HepG2 (cell line): ENCODE measurements at regions of chr1 and their contacts with region 1.

Region 1: GRCh38 chr1:70134148-70134547 is 71.2 kb downstream of the LRRC40 start:
- DNase-seq: no peak
- ATAC-seq: no peak
- H3K4me3 ChIP-seq: no peak overlapping the region
- H3K27ac ChIP-seq: no peak overlapping the region
- H3K4me1 ChIP-seq: peaks cover 19% of the 10 kb centered on the region
- H3K27me3 ChIP-seq: peaks cover 0 to 3% of the 10 kb centered on the region in 2 experiments; a peak in 1 of 5 replicates
- CTCF ChIP-seq: no peak
- EP300 ChIP-seq: no peak
- POLR2A ChIP-seq: no peak
- RAD21 ChIP-seq: no peak

Region 2: DNA sequence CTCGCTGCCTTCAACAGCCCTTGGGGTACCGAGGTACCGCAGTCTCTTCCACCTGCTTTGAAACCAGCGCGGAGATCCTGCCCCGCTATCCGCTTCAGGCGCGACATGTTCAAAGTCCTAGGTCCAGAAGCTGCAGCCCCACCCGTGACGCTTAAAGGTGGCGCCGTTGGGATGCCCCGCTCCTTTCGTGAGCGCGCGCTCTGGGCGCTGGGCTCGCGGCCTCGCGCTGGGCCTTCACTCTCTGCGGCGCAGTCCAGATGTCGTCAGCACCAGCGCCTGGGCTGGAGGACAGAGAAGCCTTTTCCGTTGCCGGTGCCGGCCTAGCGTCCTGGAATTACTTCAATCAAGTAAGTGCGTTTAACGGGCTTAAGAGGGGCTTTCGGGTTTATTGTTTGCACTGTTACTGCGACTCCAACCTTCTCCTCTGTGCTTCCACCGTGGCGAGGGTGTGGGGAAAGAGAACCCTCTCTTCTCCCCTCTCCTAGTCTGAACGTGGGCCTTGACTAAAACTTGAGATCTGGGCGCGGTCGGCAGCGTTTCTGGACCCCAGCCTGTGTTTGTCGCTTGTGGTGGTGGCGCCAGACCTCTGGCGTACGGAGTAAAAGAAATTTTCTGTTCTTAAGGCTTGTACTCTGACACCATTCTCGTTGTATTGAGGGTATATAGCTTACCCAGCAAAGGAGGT is 71.4 kb after region 1 on chr1 and contains the start of gene LRRC40:
- CTCF ChIA-PET with region 1: no interaction called
- POLR2A ChIA-PET with region 1: no interaction called
- in situ Hi-C with region 1: no loop called
- intact Hi-C with region 1: loop called (anchors 2 kb)
- DNase-seq: peak; percentile 94
- ATAC-seq: peak; percentile 94
- H3K4me3 ChIP-seq: peak within 1 kb of the TSS; percentile 81 to 98 (median 90)
- H3K27ac ChIP-seq: peak within 1 kb of the TSS; percentile 96
- H3K4me1 ChIP-seq: peaks cover 58% of the 10 kb centered on the region
- H3K27me3 ChIP-seq: no peaks in the 10 kb centered on the region; a peak in 2 of 5 replicates
- CTCF ChIP-seq: no peak
- EP300 ChIP-seq: peak in 1 of 2 experiments; percentile 37; a peak in 2 of 4 replicates
- POLR2A ChIP-seq: peak; percentile 88 to 95
- RAD21 ChIP-seq: peak; percentile 11; the same call in 1 of the 2 replicates
- total RNA-seq, gene LRRC40: 32.7 and 54.1 TPM in 2 replicates

Region 3: GRCh38 chr1:70221241-70222121 is 87.3 kb after region 1 on chr1 and contains the start of gene SRSF11:
- CTCF ChIA-PET with region 1: no interaction called
- POLR2A ChIA-PET with region 1: no interaction called
- in situ Hi-C with region 1: no loop called
- intact Hi-C with region 1: loop called (anchors 1 kb)
- DNase-seq: peak; percentile 85
- ATAC-seq: peak; percentile 97
- H3K4me3 ChIP-seq: peak within 1 kb of the TSS; percentile 82 to 97 (median 91)
- H3K27ac ChIP-seq: peak within 1 kb of the TSS; percentile 97
- H3K4me1 ChIP-seq: peaks cover 37% of the 10 kb centered on the region
- H3K27me3 ChIP-seq: no peaks in the 10 kb centered on the region; a peak in 1 of 5 replicates
- CTCF ChIP-seq: no peak
- EP300 ChIP-seq: no peak
- POLR2A ChIP-seq: peak; percentile 69 to 81
- RAD21 ChIP-seq: peak; percentile 36; the same call in 1 of the 2 replicates
- total RNA-seq, gene SRSF11: 104 and 118 TPM in 2 replicates

Region 4: DNA sequence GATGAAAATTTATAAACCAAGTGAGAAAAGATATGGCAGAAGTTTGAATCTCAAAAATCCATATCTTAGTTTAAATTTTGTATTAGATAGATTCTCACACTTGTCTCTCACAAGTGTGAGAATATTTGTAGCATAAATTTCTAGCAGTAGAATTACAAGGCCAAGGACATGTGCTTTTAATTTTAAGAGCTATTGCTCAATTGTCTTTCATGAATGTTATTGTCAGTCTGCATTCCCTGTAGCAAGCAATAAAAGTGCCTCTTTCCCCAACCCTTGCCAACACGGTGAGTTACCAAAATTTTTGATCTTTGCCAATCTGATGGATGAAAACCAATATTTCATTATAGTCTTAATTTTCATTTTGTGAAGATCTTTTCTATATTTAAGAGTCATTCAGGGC is 340.9 kb after region 1 on chr1:
- CTCF ChIA-PET with region 1: no interaction called
- POLR2A ChIA-PET with region 1: no interaction called
- in situ Hi-C with region 1: no loop called
- intact Hi-C with region 1: no loop called
- DNase-seq: no peak
- ATAC-seq: no peak
- H3K4me3 ChIP-seq: no peak overlapping the region
- H3K27ac ChIP-seq: no peak overlapping the region
- H3K4me1 ChIP-seq: no peaks in the 10 kb centered on the region
- H3K27me3 ChIP-seq: no peaks in the 10 kb centered on the region
- CTCF ChIP-seq: no peak
- EP300 ChIP-seq: no peak
- POLR2A ChIP-seq: no peak
- RAD21 ChIP-seq: no peak

Region 5: GRCh38 chr1:70487910-70488665 is 353.9 kb after region 1 on chr1:
- CTCF ChIA-PET with region 1: interaction called, 3 read pairs
- POLR2A ChIA-PET with region 1: no interaction called
- in situ Hi-C with region 1: loop called (anchors 5 kb)
- intact Hi-C with region 1: loop called (anchors 1 kb)
- DNase-seq: peak; percentile 43
- ATAC-seq: peak; percentile 95
- H3K4me3 ChIP-seq: no peak overlapping the region
- H3K27ac ChIP-seq: no peak overlapping the region
- H3K4me1 ChIP-seq: no peaks in the 10 kb centered on the region
- H3K27me3 ChIP-seq: no peaks in the 10 kb centered on the region
- CTCF ChIP-seq: peak; percentile 87
- EP300 ChIP-seq: no peak
- POLR2A ChIP-seq: no peak
- RAD21 ChIP-seq: peak; percentile 66

Region 6: DNA sequence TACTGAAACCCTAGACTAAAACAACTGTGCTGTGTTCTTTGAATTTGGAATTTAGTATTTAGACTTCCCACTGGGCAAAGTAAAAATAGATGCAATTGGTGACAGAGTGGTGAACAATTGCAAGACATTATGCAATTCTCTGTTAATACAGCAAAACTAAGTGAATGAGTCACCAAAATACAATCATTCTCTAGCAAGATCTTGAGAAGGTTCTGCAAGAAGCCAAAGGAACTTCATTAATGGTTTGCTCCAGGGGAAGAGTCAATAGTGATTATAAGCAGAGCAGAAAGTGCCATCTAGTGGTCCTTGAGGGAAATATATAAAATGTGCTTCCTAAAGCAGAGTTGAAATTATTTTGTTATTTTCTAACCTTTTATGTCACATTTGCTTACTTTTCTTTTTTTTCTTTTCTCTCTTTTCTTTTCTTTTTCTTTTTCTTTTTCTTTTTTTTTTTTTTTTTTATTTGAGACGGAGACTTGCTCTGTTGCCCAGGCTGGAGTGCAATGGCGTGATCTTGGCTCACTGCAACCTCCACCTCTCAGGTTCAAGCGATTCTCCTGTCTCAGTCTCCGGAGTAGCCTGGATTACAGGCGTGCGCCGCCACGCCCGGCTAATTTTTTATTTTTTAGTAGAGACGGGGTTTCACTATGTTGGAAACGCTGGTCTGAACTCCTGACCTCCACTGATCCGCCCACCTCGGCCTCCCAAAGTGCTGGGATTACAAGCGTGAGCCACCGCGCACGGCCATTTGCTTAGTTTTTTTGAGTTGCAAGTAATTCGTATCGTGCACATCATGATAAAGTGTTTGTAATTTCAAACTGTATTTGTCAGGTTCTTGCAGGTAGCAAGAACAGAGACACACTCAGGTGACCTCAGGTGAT is 376.1 kb after region 1 on chr1:
- CTCF ChIA-PET with region 1: interaction called, 13 read pairs
- POLR2A ChIA-PET with region 1: no interaction called
- in situ Hi-C with region 1: no loop called
- intact Hi-C with region 1: loop called (anchors 1 kb)
- DNase-seq: peak; percentile 50
- ATAC-seq: peak; percentile 77
- H3K4me3 ChIP-seq: peak overlapping the region; percentile 28 to 45 (median 31); a peak in 5 of 6 replicates
- H3K27ac ChIP-seq: no peak overlapping the region
- H3K4me1 ChIP-seq: 0 out of 2 replicates have a peak, but pooled peaks cover 4% of the 10 kb centered on the region
- H3K27me3 ChIP-seq: no peaks in the 10 kb centered on the region
- CTCF ChIP-seq: peak; percentile 68
- EP300 ChIP-seq: no peak
- POLR2A ChIP-seq: no peak
- RAD21 ChIP-seq: no peak